Panc1 (cell line): ENCODE measurements at regions of chr12 and their contacts with region 1.

Region 1: DNA sequence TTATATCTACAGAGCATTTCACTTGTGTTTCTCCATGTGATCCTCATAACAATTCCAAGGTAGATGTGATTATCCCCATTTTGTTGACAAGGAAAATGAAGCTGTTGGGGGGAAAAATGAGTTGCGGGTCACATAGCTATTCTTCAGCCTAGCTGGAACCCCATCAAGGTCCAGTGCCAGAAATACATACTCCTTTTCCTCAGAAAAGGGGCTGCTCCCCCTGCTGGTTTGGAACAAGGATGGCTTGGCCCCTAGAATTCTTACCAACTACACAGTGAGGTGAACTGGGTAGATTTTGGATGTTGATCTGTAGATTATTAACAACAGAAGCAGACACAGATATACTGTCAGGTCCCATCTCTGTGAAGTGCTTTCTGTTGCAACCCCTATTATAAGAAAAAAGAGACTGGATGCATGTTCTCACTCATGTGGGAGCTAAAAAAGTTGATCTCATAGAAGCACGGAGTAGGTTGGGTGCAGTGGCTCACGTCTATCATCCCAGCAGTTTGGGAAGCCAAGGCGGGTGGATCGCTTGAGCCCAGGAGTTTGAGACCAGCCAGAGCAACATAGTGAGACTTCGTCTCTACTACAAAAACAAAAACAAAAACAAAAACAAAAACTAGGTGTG is 8.9 kb downstream of the IKZF4 start:
- DNase-seq: no peak
- ATAC-seq: peak; percentile 87
- H3K4me3 ChIP-seq: no peak overlapping the region
- H3K27ac ChIP-seq: no peak overlapping the region
- H3K4me1 ChIP-seq: no peaks in the 10 kb centered on the region
- H3K27me3 ChIP-seq: no peaks in the 10 kb centered on the region
- CTCF ChIP-seq: peak; percentile 83

Region 2: DNA sequence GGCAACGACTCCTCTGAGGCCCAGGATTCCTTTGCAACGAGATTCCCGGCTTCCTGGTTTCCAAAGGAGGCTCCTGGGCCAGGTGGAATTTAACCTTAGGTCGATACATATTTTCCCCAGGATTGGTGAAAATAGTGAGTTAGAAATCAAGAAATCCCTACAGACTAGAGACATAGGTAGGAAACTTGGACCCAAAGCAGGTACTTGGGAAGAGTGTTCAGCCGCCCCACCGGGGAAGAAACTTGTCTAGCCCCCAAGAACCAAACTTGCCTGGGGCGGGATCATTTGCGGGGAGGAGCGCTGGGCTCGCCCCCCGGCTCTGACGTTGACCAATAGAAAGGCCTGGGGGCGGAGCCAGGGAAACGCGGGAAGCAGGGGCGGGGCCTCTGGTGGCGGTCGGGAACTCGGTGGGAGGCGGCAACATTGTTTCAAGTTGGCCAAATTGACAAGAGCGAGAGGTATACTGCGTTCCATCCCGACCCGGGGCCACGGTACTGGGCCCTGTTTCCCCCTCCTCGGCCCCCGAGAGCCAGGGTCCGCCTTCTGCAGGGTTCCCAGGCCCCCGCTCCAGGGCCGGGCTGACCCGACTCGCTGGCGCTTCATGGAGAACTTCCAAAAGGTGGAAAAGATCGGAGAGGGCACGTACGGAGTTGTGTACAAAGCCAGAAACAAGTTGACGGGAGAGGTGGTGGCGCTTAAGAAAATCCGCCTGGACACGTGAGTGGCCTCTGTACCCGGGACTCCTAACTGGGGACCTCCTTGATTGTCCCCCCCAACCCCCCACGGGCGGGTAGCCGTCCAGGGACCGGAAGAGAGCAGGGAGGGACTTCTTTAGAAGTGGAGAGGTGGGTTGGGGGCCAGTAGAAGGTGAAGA is 63.1 kb before region 1 on chr12 and contains the start of gene CDK2:
- CTCF ChIA-PET with region 1: interaction called, 11 read pairs
- POLR2A ChIA-PET with region 1: no interaction called
- in situ Hi-C with region 1: no loop called
- intact Hi-C with region 1: no loop called
- DNase-seq: no peak
- ATAC-seq: peak; percentile 98
- H3K4me3 ChIP-seq: peak within 1 kb of the TSS; percentile 92 to 98
- H3K27ac ChIP-seq: peak within 1 kb of the TSS; percentile 93
- H3K4me1 ChIP-seq: peaks cover 15% of the 10 kb centered on the region
- H3K27me3 ChIP-seq: no peaks in the 10 kb centered on the region
- CTCF ChIP-seq: no peak
- total RNA-seq, gene CDK2: 72.9 TPM

Region 3: DNA sequence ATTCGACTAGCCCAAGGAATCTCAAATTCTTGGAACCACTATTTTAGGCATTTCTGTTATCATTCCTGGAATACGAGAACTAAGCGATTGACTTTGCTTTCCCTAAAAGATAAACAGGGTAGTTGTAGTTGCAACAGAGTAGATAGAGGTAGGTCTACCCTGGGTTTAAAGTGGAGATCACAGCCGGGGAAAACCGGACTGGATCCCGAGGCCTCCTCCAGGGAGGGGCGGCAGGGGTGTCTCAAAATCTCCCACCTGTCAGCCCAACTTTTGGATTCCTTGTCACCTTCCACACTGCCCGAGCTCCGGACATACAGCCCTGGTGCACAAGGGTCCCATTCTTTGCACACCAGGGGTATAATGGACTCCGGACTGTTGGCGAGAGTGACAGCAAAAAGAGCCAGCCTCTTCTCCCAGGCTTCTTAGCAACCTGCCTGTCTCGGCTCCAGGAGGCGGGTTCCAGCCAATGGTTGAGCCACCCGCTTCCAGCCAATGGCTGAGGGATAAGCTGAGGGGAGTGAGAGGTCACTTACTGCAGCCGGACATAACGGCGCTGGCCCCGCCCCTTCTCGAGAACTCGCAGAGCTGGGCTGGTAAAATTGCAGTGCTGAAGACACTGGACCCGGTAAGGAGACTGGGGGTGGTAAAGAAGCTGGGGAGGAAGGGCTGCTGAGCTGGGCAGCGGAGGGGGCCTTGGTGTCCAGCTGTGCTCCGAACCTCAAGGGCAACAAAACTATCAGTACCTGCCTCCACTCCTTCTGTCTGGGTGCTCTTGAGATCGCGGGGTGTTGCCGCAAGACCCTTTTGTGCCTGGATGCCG is 32.9 kb before region 1 on chr12 and contains the start of gene SUOX:
- CTCF ChIA-PET with region 1: interaction called, 8 read pairs
- POLR2A ChIA-PET with region 1: no interaction called
- in situ Hi-C with region 1: no loop called
- intact Hi-C with region 1: loop called (anchors 2 kb)
- DNase-seq: peak; percentile 87
- ATAC-seq: peak; percentile 100
- H3K4me3 ChIP-seq: peak within 1 kb of the TSS; percentile 88 to 98
- H3K27ac ChIP-seq: peak within 1 kb of the TSS; percentile 90
- H3K4me1 ChIP-seq: no peaks in the 10 kb centered on the region
- H3K27me3 ChIP-seq: no peaks in the 10 kb centered on the region
- CTCF ChIP-seq: no peak
- total RNA-seq, gene SUOX: 20.7 TPM

Region 4: GRCh38 chr12:57008178-57008577 is 978.4 kb after region 1 on chr12:
- CTCF ChIA-PET with region 1: no interaction called
- POLR2A ChIA-PET with region 1: no interaction called
- in situ Hi-C with region 1: no loop called
- intact Hi-C with region 1: no loop called
- DNase-seq: peak; percentile 54
- ATAC-seq: no peak
- H3K4me3 ChIP-seq: no peak overlapping the region
- H3K27ac ChIP-seq: no peak overlapping the region
- H3K4me1 ChIP-seq: peaks cover 14% of the 10 kb centered on the region
- H3K27me3 ChIP-seq: no peaks in the 10 kb centered on the region; the same call in 1 of the 2 replicates
- CTCF ChIP-seq: peak; percentile 83